Mammary epithelial cell (primary cell): ENCODE measurements at regions of chr11 and their contacts with region 1.

Region 1: GRCh38 chr11:2724653-2725367 is 25.0 kb upstream of the KCNQ1OT1 start:
- DNase-seq: no peak
- H3K4me3 ChIP-seq: no peak overlapping the region
- H3K27ac ChIP-seq: no peak overlapping the region
- H3K4me1 ChIP-seq: no peaks in the 10 kb centered on the region
- H3K27me3 ChIP-seq: peaks cover 15% of the 10 kb centered on the region
- CTCF ChIP-seq: no peak

Region 2: DNA sequence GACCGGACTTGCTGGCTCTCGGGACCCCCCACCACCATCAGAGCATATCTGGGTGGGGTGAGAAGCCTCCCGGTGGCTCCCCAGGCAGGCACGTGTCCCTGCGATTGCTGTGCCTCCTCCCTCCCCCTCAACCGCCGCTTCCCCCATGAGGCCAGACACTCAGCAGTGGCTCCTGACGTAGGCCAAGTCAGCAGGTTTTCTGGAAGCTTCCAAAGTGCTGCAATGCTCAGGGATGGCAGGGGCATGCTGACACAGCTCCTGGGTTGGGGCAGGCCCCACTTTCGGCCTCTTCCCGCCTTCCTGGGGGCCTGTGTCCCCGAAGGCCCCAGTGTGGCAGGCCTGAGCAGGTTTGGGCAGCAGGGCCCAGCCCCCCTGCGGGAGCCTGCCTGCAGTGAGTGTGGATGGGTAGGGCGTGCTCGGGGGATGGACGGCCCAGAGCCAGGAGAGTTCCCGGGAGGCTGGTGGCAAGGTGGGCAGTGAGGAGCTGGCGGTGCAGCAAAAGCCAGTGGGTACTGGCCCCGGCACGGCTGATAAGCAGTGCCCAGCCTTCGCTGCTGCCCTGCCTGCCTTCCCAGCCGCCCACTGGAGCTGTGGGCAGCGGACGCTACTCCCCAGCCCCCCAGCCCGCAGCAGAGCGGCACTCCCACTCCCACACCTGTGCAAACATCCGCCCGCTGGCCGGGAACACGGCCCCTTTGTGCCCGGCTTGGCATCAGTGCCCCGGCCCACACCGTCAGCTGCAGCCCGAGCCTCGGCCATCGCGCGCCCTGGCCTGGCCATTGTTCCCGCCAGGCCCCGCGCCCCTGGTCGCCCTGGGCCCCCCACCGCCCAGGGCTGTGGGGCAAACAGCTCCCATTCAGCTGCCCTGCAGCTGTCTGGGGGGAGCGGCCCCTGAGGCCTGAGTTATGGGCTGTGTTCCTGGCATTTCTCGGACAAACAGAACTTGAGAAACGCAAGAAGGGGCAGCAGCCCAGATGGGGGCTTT is 150.0 kb before region 1 on chr11:
- CTCF ChIA-PET with region 1: no interaction called
- dilution Hi-C with region 1: loop called (anchors 5 kb)
- in situ Hi-C with region 1: no loop called
- intact Hi-C with region 1: no loop called
- DNase-seq: peak; percentile 24
- H3K4me3 ChIP-seq: no peak overlapping the region
- H3K27ac ChIP-seq: no peak overlapping the region
- H3K4me1 ChIP-seq: peaks cover 5% of the 10 kb centered on the region
- H3K27me3 ChIP-seq: peaks cover 2% of the 10 kb centered on the region
- CTCF ChIP-seq: no peak

Region 3: DNA sequence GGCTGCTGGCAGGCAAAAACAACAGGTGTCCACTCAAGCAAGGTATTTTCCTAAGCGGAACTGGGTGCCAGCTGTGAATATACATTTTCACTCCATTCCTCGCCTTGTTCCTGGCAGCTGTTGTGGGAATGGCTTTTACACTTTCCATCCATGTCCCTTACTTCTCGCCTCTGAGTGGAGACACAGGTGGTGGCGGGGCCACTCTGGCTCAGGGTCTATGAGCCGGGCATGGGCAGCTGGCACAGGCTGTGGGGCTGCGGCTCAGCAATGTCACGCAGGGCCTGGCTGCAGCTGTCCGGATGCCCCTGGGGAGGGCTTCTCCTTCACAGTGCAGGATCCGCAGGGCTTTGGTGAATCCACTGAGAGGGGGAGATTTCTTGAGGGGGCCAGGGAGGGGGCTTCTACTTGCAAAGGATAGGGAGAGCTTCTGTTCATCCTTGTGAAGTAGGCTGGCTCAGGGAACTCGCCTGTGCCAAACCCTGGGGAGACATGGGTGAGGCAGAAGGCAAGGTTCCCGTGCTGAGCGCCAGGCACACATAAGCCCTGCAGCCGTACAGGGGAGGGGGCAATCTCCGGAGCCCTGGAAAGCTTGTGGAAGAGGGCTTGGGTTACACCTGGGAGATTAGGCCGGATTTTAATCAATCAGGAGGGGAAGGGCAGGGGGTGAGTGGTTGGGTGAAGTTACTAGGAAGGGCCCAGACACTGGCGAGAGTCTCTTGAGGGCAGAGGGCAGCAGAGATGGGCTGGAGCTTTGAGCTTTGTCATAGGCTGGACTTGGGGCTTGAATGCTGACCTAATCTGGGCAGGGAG is 70.7 kb before region 1 on chr11:
- CTCF ChIA-PET with region 1: no interaction called
- dilution Hi-C with region 1: loop called (anchors 5 kb)
- in situ Hi-C with region 1: no loop called
- intact Hi-C with region 1: no loop called
- DNase-seq: no peak
- H3K4me3 ChIP-seq: no peak overlapping the region
- H3K27ac ChIP-seq: no peak overlapping the region
- H3K4me1 ChIP-seq: no peaks in the 10 kb centered on the region
- H3K27me3 ChIP-seq: no peaks in the 10 kb centered on the region
- CTCF ChIP-seq: no peak

Region 4: GRCh38 chr11:2681408-2682145 is 43.2 kb before region 1 on chr11:
- CTCF ChIA-PET with region 1: no interaction called
- dilution Hi-C with region 1: loop called (anchors 5 kb)
- in situ Hi-C with region 1: no loop called
- intact Hi-C with region 1: no loop called
- DNase-seq: no peak
- H3K4me3 ChIP-seq: no peak overlapping the region
- H3K27ac ChIP-seq: no peak overlapping the region
- H3K4me1 ChIP-seq: no peaks in the 10 kb centered on the region
- H3K27me3 ChIP-seq: no peaks in the 10 kb centered on the region
- CTCF ChIP-seq: no peak

Region 5: GRCh38 chr11:2768471-2769408 is 43.9 kb after region 1 on chr11:
- CTCF ChIA-PET with region 1: no interaction called
- dilution Hi-C with region 1: loop called (anchors 5 kb)
- in situ Hi-C with region 1: no loop called
- intact Hi-C with region 1: no loop called
- DNase-seq: peak; percentile 47
- H3K4me3 ChIP-seq: no peak overlapping the region
- H3K27ac ChIP-seq: no peak overlapping the region
- H3K4me1 ChIP-seq: peaks cover 5% of the 10 kb centered on the region
- H3K27me3 ChIP-seq: peaks cover 27% of the 10 kb centered on the region
- CTCF ChIP-seq: no peak